Activated T-helper 2 cell treated with anti-CD3 and anti-CD28 coated beads, Interferon-gamma antibody, Interleukin-2, Interleukin-4, amounts not matched to agents 10 μg/mL and 5 μg/mL and 100 μg/mL, durations not matched to agents 14 hours and 24 hours and 36 hours (primary cell): ENCODE measurements at regions of chr3 and their contacts with region 1.

Region 1: GRCh38 chr3:33113772-33114621 is at the start of gene CRTAP:
- DNase-seq: peak; percentile 79
- H3K4me3 Mint-ChIP-seq: peak within 1 kb of the TSS; percentile 82
- H3K27ac Mint-ChIP-seq: peak within 1 kb of the TSS; percentile 68
- H3K4me1 Mint-ChIP-seq: peaks cover 17% of the 10 kb centered on the region
- H3K27me3 Mint-ChIP-seq: no peaks in the 10 kb centered on the region
- total RNA-seq, gene CRTAP: 51.9 and 55.9 TPM in 2 replicates

Region 2: DNA sequence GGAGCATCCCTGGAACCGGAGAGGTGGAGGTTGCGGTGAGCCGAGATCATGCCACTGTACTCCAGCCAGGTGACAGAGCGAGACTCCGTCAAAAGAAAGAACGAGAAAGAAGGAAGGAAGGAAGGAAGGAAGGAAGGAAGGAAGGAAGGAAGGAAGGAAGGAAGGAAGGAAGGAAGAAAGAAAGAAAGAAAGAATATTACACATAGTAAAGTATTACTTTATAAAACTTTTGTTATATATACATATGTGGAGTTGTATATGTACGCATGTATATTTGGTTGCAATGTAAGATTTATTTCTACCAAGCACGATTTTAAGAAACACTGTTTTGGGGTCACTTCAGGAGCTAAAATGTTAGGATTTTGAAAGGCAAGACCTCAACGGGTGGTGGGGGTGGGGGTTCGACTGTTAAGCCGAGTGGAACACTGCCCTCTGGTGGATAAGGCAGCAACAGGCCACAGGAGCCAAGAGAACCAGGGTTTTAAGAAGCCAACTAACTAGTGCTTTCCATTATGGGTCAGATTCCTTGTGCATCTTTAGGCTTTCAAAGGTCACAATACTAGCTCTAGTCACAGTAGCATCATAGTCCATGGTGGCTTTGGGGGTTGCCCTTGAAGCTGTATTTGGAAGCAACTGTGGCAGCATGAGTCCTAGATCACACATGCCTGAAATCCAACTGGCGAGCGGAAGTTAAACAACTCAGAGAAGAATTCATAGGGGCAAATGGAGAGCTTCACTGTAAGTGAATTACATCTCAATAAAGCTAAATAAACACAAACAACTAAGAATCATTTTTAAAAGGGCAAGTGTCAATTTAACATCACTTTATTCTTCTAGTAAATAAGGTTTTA is 39.6 kb before region 1 on chr3:
- intact Hi-C with region 1: loop called (anchors 2 kb)
- DNase-seq: peak; percentile 51
- H3K4me3 Mint-ChIP-seq: no peak overlapping the region
- H3K27ac Mint-ChIP-seq: peak overlapping the region; percentile 64
- H3K4me1 Mint-ChIP-seq: peaks cover 53% of the 10 kb centered on the region
- H3K27me3 Mint-ChIP-seq: no peaks in the 10 kb centered on the region

Region 3: GRCh38 chr3:33096093-33096868 is 17.7 kb before region 1 on chr3:
- intact Hi-C with region 1: loop called (anchors 1 kb)
- DNase-seq: peak; percentile 31
- H3K4me3 Mint-ChIP-seq: peak overlapping the region; percentile 98
- H3K27ac Mint-ChIP-seq: peak overlapping the region; percentile 84
- H3K4me1 Mint-ChIP-seq: peaks cover 33% of the 10 kb centered on the region
- H3K27me3 Mint-ChIP-seq: no peaks in the 10 kb centered on the region

Region 4: GRCh38 chr3:33798411-33799201 is 684.6 kb after region 1 on chr3 and contains the start of gene PDCD6IP:
- intact Hi-C with region 1: loop called (anchors 10 kb)
- DNase-seq: peak; percentile 87
- H3K4me3 Mint-ChIP-seq: peak within 1 kb of the TSS; percentile 97
- H3K27ac Mint-ChIP-seq: peak within 1 kb of the TSS; percentile 93
- H3K4me1 Mint-ChIP-seq: peaks cover 44% of the 10 kb centered on the region
- H3K27me3 Mint-ChIP-seq: peaks cover 6% of the 10 kb centered on the region
- total RNA-seq, gene PDCD6IP: 180 and 190 TPM in 2 replicates